ENCODE measurements at regions of chr2 and their contacts with region 1.

Region 1: GRCh38 chr2:219294356-219295351 is 14.5 kb downstream of the PTPRN start:
- DNase-seq: peak; percentile 89 to 93 (median 92)
- ATAC-seq: peak; percentile 89
- H3K4me3 ChIP-seq: peak overlapping the region; percentile 36
- H3K27ac ChIP-seq: peak overlapping the region; percentile 76
- H3K4me1 ChIP-seq: peaks cover 22 to 57% of the 10 kb centered on the region in 2 experiments; a peak in 4 of 5 replicates
- H3K27me3 ChIP-seq: peaks cover 0 to 4% of the 10 kb centered on the region in 2 experiments; a peak in 2 of 5 replicates
- CTCF ChIP-seq: peak; percentile 93 to 99 (median 98)
- EP300 ChIP-seq: 0 out of 2 replicates have a peak, but pooled peaks have one; percentile 7
- POLR2A ChIP-seq: peak; percentile 72; the same call in 1 of the 2 replicates
- RAD21 ChIP-seq: peak; percentile 81 to 87

Region 2: DNA sequence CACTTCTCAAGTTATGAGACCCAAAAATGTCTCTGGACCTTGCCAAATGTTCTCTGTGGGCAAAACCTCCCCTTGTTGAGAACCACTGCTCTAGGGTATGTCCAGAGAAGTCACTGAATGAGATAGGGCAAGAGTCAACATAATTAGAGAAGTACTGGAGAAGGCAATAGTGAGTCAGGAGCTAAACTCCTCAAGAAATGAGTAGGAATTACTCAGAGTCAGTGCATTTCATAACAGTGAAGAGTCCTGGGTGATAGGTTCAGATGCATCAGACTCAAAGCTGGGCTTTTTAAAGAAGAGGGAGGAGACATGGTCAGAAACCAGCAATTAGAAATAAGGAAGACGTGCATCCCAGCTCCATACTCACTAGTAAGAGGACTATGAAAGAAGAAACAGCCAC is 195.3 kb before region 1 on chr2:
- CTCF ChIA-PET with region 1: no interaction called
- POLR2A ChIA-PET with region 1: no interaction called
- in situ Hi-C with region 1: no loop called
- intact Hi-C with region 1: no loop called
- DNase-seq: no peak
- ATAC-seq: no peak
- H3K4me3 ChIP-seq: no peak overlapping the region
- H3K27ac ChIP-seq: no peak overlapping the region
- H3K4me1 ChIP-seq: no peaks in the 10 kb centered on the region
- H3K27me3 ChIP-seq: no peaks in the 10 kb centered on the region
- CTCF ChIP-seq: no peak
- EP300 ChIP-seq: no peak
- POLR2A ChIP-seq: no peak
- RAD21 ChIP-seq: no peak

Region 3: GRCh38 chr2:219171231-219171651 is 123.4 kb before region 1 on chr2:
- CTCF ChIA-PET with region 1: interaction called, 5 read pairs
- POLR2A ChIA-PET with region 1: interaction called, 5 read pairs
- in situ Hi-C with region 1: loop called (anchors 5 kb)
- intact Hi-C with region 1: loop called (anchors 1 kb)
- DNase-seq: peak; percentile 41 to 59 (median 44)
- ATAC-seq: peak; percentile 82
- H3K4me3 ChIP-seq: no peak overlapping the region
- H3K27ac ChIP-seq: no peak overlapping the region; the same call in 2 of the 3 replicates
- H3K4me1 ChIP-seq: peaks cover 6% of the 10 kb centered on the region in 2 experiments; a peak in 3 of 5 replicates
- H3K27me3 ChIP-seq: no peaks in the 10 kb centered on the region
- CTCF ChIP-seq: peak; percentile 50 to 75 (median 72)
- EP300 ChIP-seq: no peak
- POLR2A ChIP-seq: no peak
- RAD21 ChIP-seq: peak; percentile 44 to 56

Region 4: DNA sequence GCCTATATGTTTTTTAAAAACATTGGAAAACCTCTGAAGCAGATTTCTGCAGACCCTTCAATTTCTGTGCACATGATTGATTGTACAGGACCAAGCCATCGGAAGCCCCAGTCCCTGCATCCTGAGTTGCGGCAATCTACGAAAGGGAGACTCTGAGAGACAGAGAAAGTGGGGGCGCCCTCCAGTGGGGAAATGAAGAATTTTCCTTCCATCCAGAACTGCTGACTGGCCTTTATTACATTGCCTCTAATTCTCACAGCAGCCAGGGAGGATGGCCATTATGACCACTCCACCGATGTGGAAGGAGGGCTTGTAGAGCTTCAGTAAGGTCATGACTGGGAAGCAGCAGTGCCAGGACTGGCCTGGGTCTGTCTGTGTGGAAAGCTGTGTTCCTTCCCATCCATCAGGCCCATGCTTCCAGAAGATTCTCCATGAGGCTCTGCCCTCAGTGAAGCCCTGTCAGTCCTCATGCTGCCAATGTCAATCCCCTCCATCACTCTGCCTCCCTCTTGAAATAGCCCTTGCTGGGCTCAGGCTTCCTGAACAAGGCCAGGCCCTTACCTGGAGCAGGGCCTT is 57.9 kb after region 1 on chr2:
- CTCF ChIA-PET with region 1: no interaction called
- POLR2A ChIA-PET with region 1: no interaction called
- in situ Hi-C with region 1: no loop called
- intact Hi-C with region 1: loop called (anchors 5 kb)
- DNase-seq: peak; percentile 59 to 76 (median 66)
- ATAC-seq: peak; percentile 96
- H3K4me3 ChIP-seq: no peak overlapping the region
- H3K27ac ChIP-seq: no peak overlapping the region
- H3K4me1 ChIP-seq: peaks cover 2 to 4% of the 10 kb centered on the region in 2 experiments; a peak in 3 of 5 replicates
- H3K27me3 ChIP-seq: peaks cover 0 to 7% of the 10 kb centered on the region in 2 experiments; a peak in 2 of 5 replicates
- CTCF ChIP-seq: peak; percentile 68 to 76 (median 74)
- EP300 ChIP-seq: no peak
- POLR2A ChIP-seq: no peak
- RAD21 ChIP-seq: peak; percentile 42 to 70

Region 5: DNA sequence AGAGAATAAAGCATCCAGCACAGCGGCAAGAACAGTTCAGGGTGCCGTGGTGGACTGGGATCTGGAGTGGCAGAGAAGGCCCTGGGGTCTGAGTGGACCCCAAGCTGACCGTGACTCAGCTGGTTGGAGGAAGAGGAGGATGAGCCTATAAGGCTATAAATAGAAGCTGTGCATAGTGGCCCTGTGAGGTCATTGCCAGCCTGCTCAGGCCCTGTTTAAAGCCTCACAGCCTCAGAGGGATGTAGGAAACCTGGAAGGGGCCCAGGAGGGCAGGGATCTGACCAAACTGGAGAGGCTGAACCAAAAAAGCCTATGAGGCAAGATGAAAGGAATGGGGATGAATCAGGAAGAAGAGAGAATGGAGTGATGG is 112.2 kb after region 1 on chr2:
- CTCF ChIA-PET with region 1: no interaction called
- POLR2A ChIA-PET with region 1: no interaction called
- in situ Hi-C with region 1: no loop called
- intact Hi-C with region 1: no loop called
- DNase-seq: peak in 1 of 4 experiments; percentile 50
- ATAC-seq: peak; percentile 46
- H3K4me3 ChIP-seq: no peak overlapping the region
- H3K27ac ChIP-seq: peak overlapping the region; percentile 31; the same call in 1 of the 3 replicates
- H3K4me1 ChIP-seq: peaks cover 17% of the 10 kb centered on the region in 2 experiments
- H3K27me3 ChIP-seq: no peaks in the 10 kb centered on the region
- CTCF ChIP-seq: no peak
- EP300 ChIP-seq: no peak
- POLR2A ChIP-seq: no peak
- RAD21 ChIP-seq: no peak

Region 6: DNA sequence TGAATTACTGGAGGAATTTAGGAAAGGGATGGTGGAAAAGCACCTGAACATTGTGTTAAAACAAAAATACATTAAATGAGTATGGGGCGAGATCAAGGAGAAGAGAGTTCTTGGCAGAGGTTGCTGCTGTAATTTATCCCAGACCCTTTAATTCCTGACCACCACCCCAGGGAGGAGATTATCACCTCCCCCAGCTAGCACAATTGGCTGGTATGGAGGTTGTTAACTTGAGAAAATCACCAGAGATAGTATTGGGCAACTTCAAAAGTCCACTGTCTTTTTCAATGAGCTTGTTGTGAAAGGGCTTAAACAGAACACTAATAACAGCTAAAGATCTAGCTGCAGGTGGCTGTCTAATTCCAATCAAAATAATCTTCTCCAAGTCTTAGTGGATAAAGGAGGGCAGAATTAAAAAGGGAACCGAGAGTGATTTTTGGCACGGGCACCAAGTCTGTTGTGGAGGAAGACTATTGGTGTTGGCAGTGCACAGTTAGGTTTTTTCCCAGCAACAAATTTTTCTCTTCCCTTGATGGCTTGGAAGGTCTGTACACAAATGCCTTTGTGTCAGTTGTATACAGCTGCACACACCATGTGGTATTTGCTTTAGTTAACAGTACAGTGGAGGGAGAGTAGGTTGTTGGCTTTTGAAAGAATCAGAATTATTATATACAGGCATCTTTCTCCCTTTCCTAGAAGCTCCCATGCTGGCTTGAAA is 622.2 kb after region 1 on chr2:
- CTCF ChIA-PET with region 1: no interaction called
- POLR2A ChIA-PET with region 1: no interaction called
- in situ Hi-C with region 1: no loop called
- intact Hi-C with region 1: no loop called
- DNase-seq: no peak
- ATAC-seq: no peak
- H3K4me3 ChIP-seq: no peak overlapping the region
- H3K27ac ChIP-seq: no peak overlapping the region
- H3K4me1 ChIP-seq: no peaks in the 10 kb centered on the region
- H3K27me3 ChIP-seq: no peaks in the 10 kb centered on the region
- CTCF ChIP-seq: no peak
- EP300 ChIP-seq: no peak
- POLR2A ChIP-seq: no peak
- RAD21 ChIP-seq: no peak

Measured in K562 (cell line).